ENCODE measurements at regions of chr10 and their contacts with region 1.

Region 1: DNA sequence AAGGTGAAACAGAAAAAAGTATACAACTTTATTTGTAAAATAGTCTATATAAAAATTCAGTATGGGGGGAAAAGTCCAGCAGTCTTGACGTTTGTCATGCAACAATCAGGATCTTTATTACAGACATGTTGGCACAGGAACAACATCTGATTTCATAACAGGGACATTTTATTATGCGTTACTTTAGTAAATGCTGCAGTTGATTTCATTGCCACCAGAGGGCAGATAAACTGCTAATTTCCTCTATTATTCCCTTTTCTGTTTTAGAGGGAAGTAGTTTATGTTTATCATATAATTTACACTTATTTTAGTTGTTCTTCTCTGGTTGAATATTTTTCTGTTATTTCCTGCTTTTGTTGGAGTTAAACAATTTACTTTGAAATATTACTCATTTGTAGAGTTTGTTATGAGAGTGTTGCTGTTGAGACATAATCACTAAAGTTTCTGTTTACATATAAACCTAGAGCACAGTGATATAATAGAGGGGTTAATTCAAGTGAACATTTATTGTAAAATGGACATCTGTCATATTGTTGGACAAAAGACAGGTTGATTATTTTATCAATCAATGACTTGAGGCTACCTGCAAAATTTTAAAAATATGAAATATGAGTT is 3.3 kb downstream of the PLXDC2 start:
- DNase-seq: no peak
- ATAC-seq: no peak

Region 2: GRCh38 chr10:20100171-20100570 is 280.6 kb after region 1 on chr10:
- intact Hi-C with region 1: loop called in 1 of 2 experiments (anchors 5 kb)
- DNase-seq: no peak
- ATAC-seq: peak; percentile 55 to 77

Region 3: GRCh38 chr10:20288060-20288459 is 468.5 kb after region 1 on chr10:
- intact Hi-C with region 1: no loop called
- DNase-seq: no peak
- ATAC-seq: peak in 1 of 2 donors; percentile 31

Region 4: GRCh38 chr10:20768843-20769242 is 949.3 kb after region 1 on chr10:
- intact Hi-C with region 1: loop called (anchors 2 to 10 kb)
- DNase-seq: no peak
- ATAC-seq: no peak

Measured in left cardiac atrium (tissue), 4 donors.